CD4-positive, alpha-beta memory T cell (primary cell): ENCODE measurements at regions of chr6 and their contacts with region 1.

Region 1: GRCh38 chr6:15245361-15246216 is at the start of gene JARID2:
- DNase-seq: peak; percentile 94 to 98 (median 95)
- H3K4me3 ChIP-seq: peak within 1 kb of the TSS; percentile 75 to 96
- H3K4me3 Mint-ChIP-seq: peak within 1 kb of the TSS; percentile 98 to 100 (median 99)
- H3K27ac ChIP-seq: peak within 1 kb of the TSS; percentile 90
- H3K27ac Mint-ChIP-seq: peak within 1 kb of the TSS; percentile 96 to 99 (median 98)
- H3K4me1 ChIP-seq: peaks cover 32% of the 10 kb centered on the region
- H3K4me1 Mint-ChIP-seq: peaks cover 19 to 49% (median 29%) of the 10 kb centered on the region in 4 donors
- H3K27me3 ChIP-seq: no peaks in the 10 kb centered on the region
- H3K27me3 Mint-ChIP-seq: peaks cover 0 to 5% of the 10 kb centered on the region in 2 donors
- total RNA-seq, gene JARID2: 20.2 to 21.6 TPM

Region 2: GRCh38 chr6:13328076-13328874 is 1917.3 kb before region 1 on chr6 and contains the start of gene TBC1D7:
- CTCF ChIA-PET with region 1: no interaction called
- POLR2A ChIA-PET with region 1: no interaction called
- intact Hi-C with region 1: loop called (anchors 10 kb)
- DNase-seq: peak; percentile 92 to 95 (median 94)
- H3K4me3 ChIP-seq: peak within 1 kb of the TSS; percentile 89 to 91
- H3K4me3 Mint-ChIP-seq: peak within 1 kb of the TSS; percentile 94 to 98 (median 96)
- H3K27ac ChIP-seq: peak within 1 kb of the TSS; percentile 90
- H3K27ac Mint-ChIP-seq: peak within 1 kb of the TSS; percentile 96 to 99 (median 98)
- H3K4me1 ChIP-seq: peaks cover 23% of the 10 kb centered on the region
- H3K4me1 Mint-ChIP-seq: peaks cover 9 to 33% (median 22%) of the 10 kb centered on the region in 4 donors
- H3K27me3 ChIP-seq: no peaks in the 10 kb centered on the region
- H3K27me3 Mint-ChIP-seq: no peaks in the 10 kb centered on the region
- total RNA-seq, gene TBC1D7: 12.6 to 13.2 TPM

Region 3: GRCh38 chr6:13814176-13814937 is 1431.2 kb before region 1 on chr6 and contains the start of gene MCUR1:
- CTCF ChIA-PET with region 1: no interaction called
- POLR2A ChIA-PET with region 1: no interaction called
- intact Hi-C with region 1: loop called (anchors 5 kb)
- DNase-seq: peak; percentile 77 to 83 (median 81)
- H3K4me3 ChIP-seq: peak within 1 kb of the TSS; percentile 34 to 78
- H3K4me3 Mint-ChIP-seq: peak within 1 kb of the TSS; percentile 88 to 93 (median 90)
- H3K27ac ChIP-seq: peak within 1 kb of the TSS; percentile 62
- H3K27ac Mint-ChIP-seq: peak within 1 kb of the TSS; percentile 82 to 92 (median 89)
- H3K4me1 ChIP-seq: peaks cover 28% of the 10 kb centered on the region
- H3K4me1 Mint-ChIP-seq: peaks cover 24 to 33% (median 31%) of the 10 kb centered on the region in 4 donors
- H3K27me3 ChIP-seq: no peaks in the 10 kb centered on the region
- H3K27me3 Mint-ChIP-seq: no peaks in the 10 kb centered on the region
- total RNA-seq, gene MCUR1: 11.3 to 11.5 TPM

Region 4: DNA sequence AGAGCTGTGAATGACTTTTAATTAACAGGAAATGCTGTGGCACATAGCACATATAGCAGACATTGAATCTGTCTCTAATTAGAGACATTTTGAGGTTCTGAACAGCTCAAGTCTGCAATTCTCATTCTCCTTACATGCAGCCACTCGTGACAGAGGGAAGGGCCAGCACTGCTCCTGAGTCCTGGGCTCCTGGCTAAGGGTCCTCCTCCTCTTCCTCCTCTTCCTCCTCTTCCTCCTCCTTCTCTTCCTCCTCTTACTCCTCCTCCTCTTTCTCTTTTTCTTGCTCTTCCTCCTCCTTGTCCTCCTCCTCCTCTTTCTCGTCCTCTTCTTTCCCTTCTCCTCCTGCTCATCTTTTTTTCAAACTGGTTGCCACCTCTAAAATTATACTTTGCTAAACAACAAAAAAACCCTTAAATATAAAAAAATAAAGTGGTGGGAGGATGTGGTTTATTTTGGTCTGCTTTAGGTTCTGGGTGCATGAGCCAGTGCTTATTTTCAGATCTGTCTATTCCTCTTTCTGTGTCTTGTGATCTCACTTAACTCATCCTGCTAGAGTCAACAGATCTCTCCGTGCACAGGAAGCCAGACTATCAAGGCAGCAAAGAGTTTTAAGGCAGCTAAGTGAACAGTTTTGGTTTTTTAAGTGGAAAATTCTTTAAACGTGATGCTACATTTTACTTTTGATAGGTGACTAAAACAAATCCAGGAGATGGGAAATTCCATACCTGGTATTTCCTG is 968.8 kb before region 1 on chr6:
- CTCF ChIA-PET with region 1: no interaction called
- POLR2A ChIA-PET with region 1: interaction called, 3 read pairs
- intact Hi-C with region 1: loop called (anchors 5 kb)
- DNase-seq: peak; percentile 63 to 80 (median 76)
- H3K4me3 ChIP-seq: peak overlapping the region; percentile 5 to 17
- H3K4me3 Mint-ChIP-seq: peak overlapping the region; percentile 61 to 88 (median 68)
- H3K27ac ChIP-seq: peak overlapping the region; percentile 35
- H3K27ac Mint-ChIP-seq: peak overlapping the region; percentile 80 to 98 (median 88)
- H3K4me1 ChIP-seq: peaks cover 40% of the 10 kb centered on the region
- H3K4me1 Mint-ChIP-seq: peaks cover 31 to 52% (median 36%) of the 10 kb centered on the region in 4 donors
- H3K27me3 ChIP-seq: no peaks in the 10 kb centered on the region
- H3K27me3 Mint-ChIP-seq: no peaks in the 10 kb centered on the region

Region 5: GRCh38 chr6:15299430-15300131 is 54.0 kb after region 1 on chr6:
- CTCF ChIA-PET with region 1: no interaction called
- POLR2A ChIA-PET with region 1: no interaction called
- intact Hi-C with region 1: loop called (anchors 10 kb)
- DNase-seq: peak in 1 of 5 donors; percentile 49
- H3K4me3 ChIP-seq: no peak overlapping the region
- H3K4me3 Mint-ChIP-seq: peak overlapping the region in 7 of 8 donors; percentile 1 to 66 (median 44)
- H3K27ac ChIP-seq: no peak overlapping the region
- H3K27ac Mint-ChIP-seq: peak overlapping the region in 6 of 7 donors; percentile 7 to 68 (median 62)
- H3K4me1 ChIP-seq: peaks cover 75% of the 10 kb centered on the region
- H3K4me1 Mint-ChIP-seq: peaks cover 54 to 81% (median 68%) of the 10 kb centered on the region in 4 donors
- H3K27me3 ChIP-seq: no peaks in the 10 kb centered on the region
- H3K27me3 Mint-ChIP-seq: no peaks in the 10 kb centered on the region

Region 6: DNA sequence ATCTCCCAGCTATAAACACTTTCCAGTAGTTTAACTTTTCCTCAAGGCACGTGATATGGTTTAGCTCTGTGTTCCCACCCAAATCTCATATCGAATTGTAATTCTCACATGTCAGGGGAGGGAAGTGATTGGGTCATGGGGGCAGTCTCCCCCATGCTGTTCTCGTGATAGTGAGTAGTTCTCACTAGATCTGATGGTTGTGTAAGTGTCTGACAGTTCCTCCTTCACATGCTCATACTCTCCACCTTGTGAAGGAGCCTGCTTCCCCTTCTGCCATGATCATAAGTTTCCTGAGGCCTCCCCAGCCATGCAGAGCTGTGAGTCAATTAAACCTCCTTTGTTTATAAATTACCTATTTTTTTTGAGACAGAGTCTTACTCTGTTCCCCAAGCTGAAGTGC is 289.4 kb after region 1 on chr6:
- CTCF ChIA-PET with region 1: no interaction called
- POLR2A ChIA-PET with region 1: no interaction called
- intact Hi-C with region 1: no loop called
- DNase-seq: no peak
- H3K4me3 ChIP-seq: no peak overlapping the region
- H3K4me3 Mint-ChIP-seq: no peak overlapping the region
- H3K27ac ChIP-seq: no peak overlapping the region
- H3K27ac Mint-ChIP-seq: peak overlapping the region in 4 of 7 donors; percentile 5 to 55 (median 37)
- H3K4me1 ChIP-seq: no peaks in the 10 kb centered on the region
- H3K4me1 Mint-ChIP-seq: peaks cover 0 to 14% (median 5%) of the 10 kb centered on the region in 4 donors
- H3K27me3 ChIP-seq: no peaks in the 10 kb centered on the region
- H3K27me3 Mint-ChIP-seq: no peaks in the 10 kb centered on the region

Region 7: GRCh38 chr6:16128759-16129622 is 883.4 kb after region 1 on chr6 and contains the start of gene MYLIP:
- CTCF ChIA-PET with region 1: no interaction called
- POLR2A ChIA-PET with region 1: interaction called, 4 read pairs
- intact Hi-C with region 1: loop called (anchors 2 kb)
- DNase-seq: peak; percentile 96 to 97 (median 97)
- H3K4me3 ChIP-seq: peak within 1 kb of the TSS; percentile 66 to 89
- H3K4me3 Mint-ChIP-seq: peak within 1 kb of the TSS; percentile 95 to 99 (median 98)
- H3K27ac ChIP-seq: peak within 1 kb of the TSS; percentile 93
- H3K27ac Mint-ChIP-seq: peak within 1 kb of the TSS; percentile 96 to 98 (median 97)
- H3K4me1 ChIP-seq: peaks cover 38% of the 10 kb centered on the region
- H3K4me1 Mint-ChIP-seq: peaks cover 18 to 54% (median 31%) of the 10 kb centered on the region in 4 donors
- H3K27me3 ChIP-seq: no peaks in the 10 kb centered on the region
- H3K27me3 Mint-ChIP-seq: peaks cover 3% of the 10 kb centered on the region in 2 donors
- total RNA-seq, gene MYLIP: 17.5 to 19.9 TPM